Gastrocnemius medialis (tissue), 4 donors: ENCODE measurements at regions of chr7 and their contacts with region 1.

Region 1: DNA sequence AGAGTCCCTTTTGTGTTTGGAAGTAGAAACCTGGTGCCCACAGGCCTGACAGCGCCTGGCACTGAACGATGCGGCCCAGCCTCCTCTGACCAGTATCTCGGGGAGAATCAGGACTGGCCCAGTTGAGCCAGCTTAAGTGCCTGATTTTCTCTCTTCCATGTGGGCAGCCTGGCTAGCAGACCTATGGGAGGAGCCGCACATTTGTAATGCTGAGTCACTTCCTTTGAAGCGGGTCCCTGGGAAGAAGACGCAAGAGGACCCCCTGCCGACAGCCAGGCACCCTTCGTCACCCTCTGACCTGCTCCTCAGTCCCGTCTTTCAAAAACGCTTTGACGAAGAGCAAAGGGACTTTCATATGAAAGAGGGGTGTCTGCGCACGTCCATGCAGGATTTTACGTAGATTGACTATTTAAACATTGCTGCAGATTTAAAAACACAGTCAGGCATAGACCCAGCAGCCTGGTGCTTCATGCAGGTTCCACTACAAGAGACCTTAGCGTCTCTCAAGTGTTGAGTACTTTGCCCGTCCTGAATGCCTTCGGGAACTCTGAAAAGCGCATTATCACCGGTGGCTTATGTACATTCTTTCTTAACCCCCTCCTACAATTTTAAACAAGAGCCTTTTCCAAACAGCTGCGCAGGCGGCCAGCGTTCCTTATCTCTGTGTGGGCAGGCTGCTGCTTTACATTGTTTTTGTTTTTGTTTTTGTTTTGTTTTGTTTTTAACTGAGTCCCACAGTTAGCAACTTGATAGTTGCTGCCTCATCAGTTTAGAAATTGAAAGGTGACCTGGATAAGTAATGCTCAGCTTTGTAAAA is 36.5 kb upstream of the AP5Z1 start:
- DNase-seq: peak in 1 of 2 donors; percentile 57
- ATAC-seq: peak; percentile 15 to 42
- H3K4me3 ChIP-seq: peak overlapping the region; percentile 34 to 56 (median 47)
- H3K27ac ChIP-seq: peak overlapping the region; percentile 83 to 94 (median 92)
- H3K4me1 ChIP-seq: peaks cover 48 to 59% of the 10 kb centered on the region in 2 donors
- H3K27me3 ChIP-seq: no peaks in the 10 kb centered on the region
- CTCF ChIP-seq: no peak
- POLR2A ChIP-seq: peak in 1 of 2 donors; percentile 13

Region 2: DNA sequence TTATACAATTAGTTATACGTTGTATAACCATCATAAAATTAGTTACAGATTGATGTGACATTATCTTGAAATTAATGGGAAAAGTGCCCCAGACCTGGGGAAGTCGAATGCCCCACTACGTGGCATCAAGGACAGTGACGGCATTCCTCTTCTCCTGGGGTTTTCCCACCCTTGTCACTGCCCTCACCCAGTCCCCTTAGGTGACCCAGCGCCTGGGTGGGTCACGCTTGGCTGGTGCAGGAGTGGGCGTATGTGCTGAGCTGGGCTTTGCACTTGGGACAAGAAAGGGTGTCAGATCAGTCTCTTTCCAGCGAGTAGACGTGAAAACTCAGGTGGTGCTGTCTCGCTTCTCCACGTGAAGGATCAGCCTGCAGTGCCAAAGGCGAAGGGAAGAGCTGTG is 49.3 kb before region 1 on chr7:
- in situ Hi-C with region 1: loop called in 3 of 4 experiments (anchors 5 to 10 kb)
- intact Hi-C with region 1: loop called (anchors 1 kb)
- DNase-seq: no peak
- ATAC-seq: no peak
- H3K4me3 ChIP-seq: no peak overlapping the region
- H3K27ac ChIP-seq: peak overlapping the region in 3 of 4 donors; percentile 19 to 39 (median 30)
- H3K4me1 ChIP-seq: peaks cover 62 to 80% of the 10 kb centered on the region in 2 donors
- H3K27me3 ChIP-seq: no peaks in the 10 kb centered on the region
- CTCF ChIP-seq: no peak
- POLR2A ChIP-seq: no peak